Activated CD4-positive, alpha-beta memory T cell treated with anti-CD3 and anti-CD28 coated beads, Interleukin-2, amount 10 ng/mL, durations not matched to agents 7 days and 5 days (primary cell): ENCODE measurements at regions of chr3 and their contacts with region 1.

Region 1: GRCh38 chr3:39126532-39127071 is 19.1 kb downstream of the TTC21A start:
- DNase-seq: no peak
- H3K4me3 Mint-ChIP-seq: no peak overlapping the region
- H3K27ac Mint-ChIP-seq: no peak overlapping the region
- H3K4me1 Mint-ChIP-seq: peaks cover 24% of the 10 kb centered on the region
- H3K27me3 Mint-ChIP-seq: no peaks in the 10 kb centered on the region

Region 2: GRCh38 chr3:39107388-39108199 is 19.0 kb before region 1 on chr3 and contains the starts of genes GORASP1 and TTC21A:
- CTCF ChIA-PET with region 1: interaction called, 18 read pairs
- POLR2A ChIA-PET with region 1: interaction called, 20 read pairs
- DNase-seq: peak; percentile 81
- H3K4me3 Mint-ChIP-seq: peak within 1 kb of the TSS; percentile 84
- H3K27ac Mint-ChIP-seq: peak within 1 kb of the TSS; percentile 91
- H3K4me1 Mint-ChIP-seq: peaks cover 50% of the 10 kb centered on the region
- H3K27me3 Mint-ChIP-seq: no peaks in the 10 kb centered on the region
- total RNA-seq, gene GORASP1: 52.0 to 53.1 TPM
- total RNA-seq, gene TTC21A: 11.2 to 12.1 TPM